ENCODE measurements at regions of chr11 and their contacts with region 1.

Region 1: DNA sequence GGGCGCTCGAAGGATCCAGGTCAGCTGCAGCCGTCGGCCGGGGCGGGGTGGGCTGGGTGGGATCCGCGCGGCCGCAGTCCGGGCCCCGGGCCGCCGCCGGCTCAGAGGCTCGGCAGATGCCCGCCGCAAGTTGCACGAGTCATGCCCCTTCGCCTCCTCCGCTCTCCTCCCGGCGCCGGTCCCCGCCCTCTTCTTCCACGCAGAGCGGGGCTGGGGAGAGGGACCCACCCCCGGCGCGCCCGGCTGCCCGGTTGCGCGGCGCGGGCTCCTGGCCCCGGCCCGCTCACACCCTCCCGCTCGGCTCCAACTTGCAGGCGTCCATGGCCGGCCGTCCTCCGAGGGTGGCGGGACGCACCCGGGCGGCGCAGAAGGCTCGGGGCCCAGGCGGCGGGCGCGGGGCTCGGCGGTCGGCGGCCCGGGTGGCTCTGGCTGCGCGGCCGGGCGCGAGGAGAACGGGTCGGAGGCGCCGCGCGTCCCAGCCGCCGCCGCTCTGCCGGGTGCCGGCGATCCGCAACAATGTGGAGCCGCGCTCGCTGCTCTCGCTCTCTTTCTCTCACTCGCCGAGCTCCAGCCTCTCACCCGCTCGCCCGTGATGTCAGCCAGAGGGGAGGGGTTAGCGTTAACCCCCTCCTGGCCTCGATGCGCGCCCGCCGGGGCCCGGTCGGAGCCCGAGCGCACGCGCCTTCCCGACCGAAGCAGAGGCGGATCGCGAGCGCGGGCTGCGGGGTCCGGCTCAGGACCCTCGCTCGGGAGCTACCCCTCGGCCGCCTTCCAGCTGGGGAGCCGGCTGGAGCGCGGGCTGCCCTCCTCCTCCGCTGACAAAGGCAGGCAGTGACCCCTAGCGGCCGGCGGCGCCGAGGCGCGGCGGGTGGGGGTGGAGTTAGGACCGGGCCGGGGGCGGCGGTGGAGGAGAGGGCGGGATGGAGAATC is at the start of gene NECTIN1:
- DNase-seq: peak; percentile 93
- H3K4me3 ChIP-seq: peak within 1 kb of the TSS; percentile 56 to 83 (median 70)
- H3K27ac ChIP-seq: peak within 1 kb of the TSS; percentile 88 to 94 (median 90)
- H3K4me1 ChIP-seq: peaks cover 0 to 34% (median 29%) of the 10 kb centered on the region in 4 donors
- H3K27me3 ChIP-seq: no peaks in the 10 kb centered on the region
- CTCF ChIP-seq: peak; percentile 75 to 98 (median 82)
- EP300 ChIP-seq: no peak
- POLR2A ChIP-seq: peak in 1 of 2 donors; percentile 43
- total RNA-seq, gene NECTIN1: 0.16 to 1.7 (median 1.1) TPM

Region 2: DNA sequence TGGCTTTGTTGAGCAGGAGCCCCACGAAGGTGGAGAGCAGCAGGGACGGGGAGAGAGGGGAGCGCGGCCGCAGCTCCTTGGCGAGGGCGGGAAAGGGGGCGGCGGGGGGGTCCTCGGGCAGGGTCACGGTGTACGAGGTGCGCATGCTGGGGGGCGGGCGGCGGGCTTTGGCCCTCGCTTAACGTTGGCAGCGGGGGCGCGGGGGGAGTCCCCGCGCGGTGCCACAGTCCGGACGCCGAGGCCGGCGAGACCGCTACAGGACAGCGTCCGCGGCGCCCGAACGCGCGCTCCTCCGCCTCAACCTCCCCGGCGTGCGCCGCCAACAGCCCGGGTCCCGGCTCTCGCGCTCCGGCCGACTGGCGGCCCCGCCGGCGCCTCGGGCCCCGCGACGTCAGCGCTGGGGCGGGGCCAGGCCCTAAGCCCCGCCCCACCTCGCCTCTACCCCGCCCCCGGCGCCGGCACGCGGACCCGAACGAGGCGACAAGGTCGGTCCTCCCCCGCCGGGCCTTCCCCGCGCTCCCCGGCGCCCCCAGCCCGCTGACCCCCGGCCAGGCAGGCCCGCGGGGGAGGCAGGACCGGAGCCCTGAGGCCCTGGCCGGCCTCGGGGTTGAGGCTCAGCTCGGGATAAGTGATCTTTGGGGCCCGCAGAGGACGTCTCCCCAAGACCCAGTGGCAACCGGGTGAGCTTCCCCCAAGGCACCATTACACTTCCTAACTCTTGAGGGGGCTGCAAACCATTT is 364.9 kb before region 1 on chr11:
- intact Hi-C with region 1: loop called (anchors 10 kb)
- DNase-seq: peak; percentile 81
- H3K4me3 ChIP-seq: peak overlapping the region; percentile 24 to 60 (median 51)
- H3K27ac ChIP-seq: peak overlapping the region; percentile 68 to 91 (median 76)
- H3K4me1 ChIP-seq: peaks cover 0 to 79% (median 66%) of the 10 kb centered on the region in 4 donors
- H3K27me3 ChIP-seq: no peaks in the 10 kb centered on the region
- CTCF ChIP-seq: no peak
- EP300 ChIP-seq: no peak
- POLR2A ChIP-seq: no peak

Region 3: GRCh38 chr11:119481021-119481666 is 247.8 kb before region 1 on chr11:
- intact Hi-C with region 1: loop called (anchors 5 kb)
- DNase-seq: peak; percentile 90
- H3K4me3 ChIP-seq: no peak overlapping the region
- H3K27ac ChIP-seq: no peak overlapping the region
- H3K4me1 ChIP-seq: peaks cover 0 to 5% (median 2%) of the 10 kb centered on the region in 4 donors
- H3K27me3 ChIP-seq: no peaks in the 10 kb centered on the region
- CTCF ChIP-seq: peak; percentile 74 to 95 (median 92)
- EP300 ChIP-seq: no peak
- POLR2A ChIP-seq: no peak

Region 4: DNA sequence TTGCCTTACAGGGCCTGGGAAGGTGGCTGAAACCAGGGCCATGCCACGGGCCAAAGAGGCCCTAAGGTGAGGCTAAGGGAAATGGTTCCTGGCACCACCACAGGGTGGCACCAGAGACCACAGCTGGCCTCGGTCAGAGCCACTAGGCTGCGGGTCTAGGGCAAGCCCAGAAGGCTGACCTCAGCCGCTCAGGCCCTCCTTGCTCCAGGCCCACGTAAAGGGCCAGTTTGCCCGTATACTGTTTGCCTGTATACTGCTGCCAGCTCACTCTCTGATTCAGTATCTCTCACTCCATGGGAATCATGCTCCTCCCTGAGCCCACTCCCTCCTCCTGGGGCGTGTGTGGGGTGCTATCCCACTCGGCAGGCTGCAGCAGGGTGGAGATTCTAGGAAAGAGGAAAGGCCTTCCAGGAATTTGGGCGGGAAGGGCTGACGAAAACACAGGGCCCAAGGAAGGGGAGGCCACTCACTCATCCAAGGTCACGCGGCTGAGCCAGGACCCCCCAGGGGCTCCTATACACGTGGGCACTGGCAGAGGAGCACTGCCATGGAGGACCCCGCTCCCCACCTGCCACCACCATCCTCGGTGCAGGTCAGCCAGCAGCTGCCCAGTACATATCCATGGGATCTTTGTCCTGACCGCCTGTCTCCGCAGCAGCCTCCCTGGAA is 62.3 kb before region 1 on chr11:
- intact Hi-C with region 1: loop called (anchors 1 kb)
- DNase-seq: peak; percentile 82
- H3K4me3 ChIP-seq: no peak overlapping the region
- H3K27ac ChIP-seq: no peak overlapping the region
- H3K4me1 ChIP-seq: peaks cover 0 to 10% (median 8%) of the 10 kb centered on the region in 4 donors
- H3K27me3 ChIP-seq: no peaks in the 10 kb centered on the region
- CTCF ChIP-seq: peak; percentile 88 to 94 (median 93)
- EP300 ChIP-seq: no peak
- POLR2A ChIP-seq: no peak

Region 5: DNA sequence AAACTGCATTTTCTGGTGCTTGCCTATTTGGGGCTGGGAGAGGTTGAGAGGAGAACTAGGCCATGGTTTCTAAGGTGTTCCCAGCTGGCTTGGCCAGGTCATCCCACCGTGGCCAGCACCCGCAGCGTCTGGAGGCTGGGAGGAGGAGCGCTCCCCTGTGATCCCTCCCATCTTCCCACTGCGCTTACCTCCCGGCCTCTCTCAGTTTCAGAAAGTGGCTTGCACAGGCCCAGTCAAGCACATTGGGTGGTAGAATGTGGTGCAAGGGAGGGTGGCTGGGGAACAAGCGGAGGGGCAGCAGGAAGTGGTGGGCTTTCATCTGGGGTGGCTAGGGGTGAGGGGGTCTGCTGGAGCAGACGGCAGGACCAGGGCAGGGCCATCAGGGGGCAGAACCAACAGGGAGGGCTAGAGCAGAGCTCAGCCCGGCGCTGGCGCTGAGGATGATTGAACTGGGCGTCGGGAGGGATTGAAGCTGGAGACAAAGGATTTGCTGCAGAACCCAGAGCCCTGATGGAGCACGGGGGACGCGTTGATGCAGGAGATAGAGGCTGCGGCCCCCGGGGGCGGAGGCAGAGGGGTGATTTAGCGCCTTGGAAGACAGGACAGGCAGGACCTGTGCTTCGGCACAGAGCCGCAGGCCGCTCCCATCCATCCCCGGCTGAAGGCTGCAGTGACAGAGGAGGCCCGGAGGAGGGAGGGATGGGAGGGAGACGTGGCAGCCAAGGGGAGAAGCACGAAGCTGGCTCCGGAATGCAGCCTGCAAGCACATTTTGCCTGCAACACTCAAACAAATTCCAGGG is 333.0 kb after region 1 on chr11:
- intact Hi-C with region 1: no loop called
- DNase-seq: no peak
- H3K4me3 ChIP-seq: no peak overlapping the region
- H3K27ac ChIP-seq: no peak overlapping the region
- H3K4me1 ChIP-seq: peaks cover 0 to 8% (median 0%) of the 10 kb centered on the region in 4 donors
- H3K27me3 ChIP-seq: peaks cover 0 to 20% (median 15%) of the 10 kb centered on the region in 3 donors
- CTCF ChIP-seq: no peak
- EP300 ChIP-seq: no peak
- POLR2A ChIP-seq: no peak

Region 6: GRCh38 chr11:120108154-120108865 is 379.4 kb after region 1 on chr11:
- intact Hi-C with region 1: loop called (anchors 5 kb)
- DNase-seq: peak; percentile 77
- H3K4me3 ChIP-seq: no peak overlapping the region
- H3K27ac ChIP-seq: no peak overlapping the region
- H3K4me1 ChIP-seq: no peaks in the 10 kb centered on the region
- H3K27me3 ChIP-seq: peaks cover 0 to 10% (median 0%) of the 10 kb centered on the region in 3 donors
- CTCF ChIP-seq: peak; percentile 85 to 100 (median 98)
- EP300 ChIP-seq: no peak
- POLR2A ChIP-seq: no peak

Region 7: GRCh38 chr11:120128782-120129172 is 399.9 kb after region 1 on chr11:
- intact Hi-C with region 1: loop called (anchors 5 kb)
- DNase-seq: peak; percentile 93
- H3K4me3 ChIP-seq: peak overlapping the region in 1 of 4 donors; percentile 12
- H3K27ac ChIP-seq: peak overlapping the region; percentile 53 to 89 (median 66)
- H3K4me1 ChIP-seq: peaks cover 0 to 23% (median 21%) of the 10 kb centered on the region in 4 donors
- H3K27me3 ChIP-seq: no peaks in the 10 kb centered on the region
- CTCF ChIP-seq: peak in 1 of 4 experiments; percentile 1
- EP300 ChIP-seq: peak in 1 of 4 donors; percentile 53
- POLR2A ChIP-seq: no peak

Region 8: DNA sequence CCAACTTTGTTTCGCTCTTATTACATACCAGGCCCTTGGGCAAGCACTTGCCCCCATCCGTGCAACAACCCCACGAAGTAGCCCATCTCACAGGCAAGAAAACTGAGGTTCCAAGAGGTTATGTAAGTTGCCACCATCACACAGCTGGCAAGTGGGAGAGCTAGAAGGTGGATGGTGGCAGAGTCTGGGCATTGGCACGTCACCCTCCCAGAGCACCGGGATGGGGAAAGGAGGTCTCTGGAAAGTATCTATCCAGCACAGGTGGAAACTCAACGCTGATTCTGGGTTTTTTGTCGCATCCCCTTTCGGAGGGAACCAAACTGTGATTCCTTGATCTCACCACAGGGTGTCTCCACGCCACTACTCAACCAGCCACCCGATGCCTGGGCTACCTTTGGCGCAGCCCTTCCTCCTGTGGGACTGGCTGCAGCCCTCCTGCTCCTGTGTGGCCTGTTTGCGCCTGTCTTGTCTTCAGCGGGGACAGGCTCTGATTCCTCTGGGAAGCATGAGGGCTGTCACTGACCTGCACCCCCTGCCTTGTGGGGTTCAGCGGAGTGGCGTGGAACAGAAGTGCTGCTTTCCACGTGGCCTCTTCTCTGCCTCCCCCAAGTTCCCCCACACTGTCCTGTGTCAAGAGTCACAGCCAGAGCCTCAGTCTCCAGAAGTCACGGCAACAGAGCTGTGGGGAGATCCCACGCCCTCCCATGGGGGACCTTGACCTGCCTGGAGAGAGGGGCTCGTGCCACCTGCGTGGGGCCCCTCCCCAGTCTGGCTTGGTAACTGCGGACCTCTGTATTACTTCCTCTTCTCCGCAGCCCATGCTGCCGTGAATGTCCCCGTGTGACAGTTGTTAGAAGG is 443.4 kb after region 1 on chr11:
- intact Hi-C with region 1: loop called (anchors 5 kb)
- DNase-seq: peak; percentile 87
- H3K4me3 ChIP-seq: no peak overlapping the region
- H3K27ac ChIP-seq: no peak overlapping the region
- H3K4me1 ChIP-seq: peaks cover 0 to 18% (median 18%) of the 10 kb centered on the region in 4 donors
- H3K27me3 ChIP-seq: peaks cover 0 to 27% (median 12%) of the 10 kb centered on the region in 3 donors
- CTCF ChIP-seq: peak; percentile 56 to 80 (median 76)
- EP300 ChIP-seq: no peak
- POLR2A ChIP-seq: no peak